Activated T-helper 2 cell treated with anti-CD3 and anti-CD28 coated beads, Interferon-gamma antibody, Interleukin-2, Interleukin-4, amounts not matched to agents 10 μg/mL and 5 μg/mL and 100 μg/mL, durations not matched to agents 14 hours and 24 hours and 36 hours (primary cell): ENCODE measurements at regions of chr9 and their contacts with region 1.

Region 1: DNA sequence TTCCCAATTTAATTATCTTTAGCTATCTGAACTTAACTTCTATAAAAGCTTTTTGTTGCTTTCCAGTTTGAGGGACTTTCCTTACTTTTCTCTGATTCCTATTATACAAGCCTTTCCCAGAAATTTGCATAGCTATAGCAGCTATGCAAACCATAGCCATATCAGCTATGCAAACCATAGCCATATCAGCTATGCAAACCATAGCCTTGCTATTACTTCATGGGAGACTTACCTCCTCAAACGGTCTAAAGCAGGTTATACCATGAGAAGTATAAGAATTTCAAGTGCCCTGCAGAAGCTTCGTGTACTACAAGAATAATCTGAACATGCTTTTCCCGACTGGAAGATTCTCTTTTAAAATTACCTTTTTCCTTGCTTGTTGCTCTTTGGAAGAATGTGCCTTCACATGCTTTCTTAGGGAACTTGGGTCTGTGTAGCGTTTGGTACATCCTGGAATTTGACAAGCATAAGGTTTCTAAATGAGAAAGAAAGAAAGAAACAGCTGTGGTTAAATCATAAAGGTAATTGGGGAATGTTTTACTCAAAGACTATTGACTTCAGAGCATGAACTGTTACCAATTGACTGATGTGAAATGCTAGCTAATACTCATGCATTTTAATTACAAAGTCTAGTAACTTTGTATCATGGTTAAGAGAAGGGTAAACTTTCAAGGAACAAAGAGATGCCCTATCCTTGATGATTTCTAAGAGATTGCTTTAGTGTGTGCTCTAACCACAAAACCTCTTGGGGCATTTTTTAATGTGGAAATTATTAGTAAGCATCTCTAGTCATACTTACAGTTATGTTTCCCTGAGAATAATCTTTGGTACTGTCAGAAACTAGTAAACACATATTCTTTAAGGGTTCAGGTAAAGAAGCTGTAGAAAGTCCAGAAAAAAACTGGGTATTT is 367.6 kb downstream of the GLIS3 start:
- DNase-seq: no peak
- H3K4me3 Mint-ChIP-seq: peak overlapping the region; percentile 51
- H3K27ac Mint-ChIP-seq: peak overlapping the region; percentile 93
- H3K4me1 Mint-ChIP-seq: peaks cover 33% of the 10 kb centered on the region
- H3K27me3 Mint-ChIP-seq: no peaks in the 10 kb centered on the region

Region 2: GRCh38 chr9:3868012-3868411 is 64.2 kb before region 1 on chr9:
- intact Hi-C with region 1: loop called (anchors 2 kb)
- DNase-seq: no peak
- H3K4me3 Mint-ChIP-seq: no peak overlapping the region
- H3K27ac Mint-ChIP-seq: no peak overlapping the region
- H3K4me1 Mint-ChIP-seq: peaks cover 57% of the 10 kb centered on the region
- H3K27me3 Mint-ChIP-seq: no peaks in the 10 kb centered on the region

Region 3: DNA sequence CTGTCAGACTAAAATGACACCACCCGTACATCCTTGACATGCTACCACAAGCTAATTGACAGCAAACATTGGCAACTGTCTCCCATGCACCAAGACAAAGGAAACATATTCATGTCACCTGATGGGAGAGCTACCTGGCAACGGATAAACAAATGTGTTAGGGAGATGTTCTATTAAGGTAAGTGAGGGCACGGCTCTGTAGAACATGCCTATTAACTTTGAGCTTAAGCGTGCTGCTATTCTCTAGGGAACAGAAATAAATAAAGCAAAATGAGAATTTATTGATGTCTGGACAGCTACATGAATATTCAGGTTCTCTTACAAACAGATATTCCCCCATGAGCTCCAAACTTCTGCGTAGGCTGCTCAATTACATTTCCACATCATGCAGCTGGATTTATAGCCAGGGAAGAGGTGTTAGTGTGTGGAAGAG is 45.0 kb before region 1 on chr9:
- intact Hi-C with region 1: loop called (anchors 5 kb)
- DNase-seq: no peak
- H3K4me3 Mint-ChIP-seq: no peak overlapping the region
- H3K27ac Mint-ChIP-seq: no peak overlapping the region
- H3K4me1 Mint-ChIP-seq: peaks cover 51% of the 10 kb centered on the region
- H3K27me3 Mint-ChIP-seq: no peaks in the 10 kb centered on the region

Region 4: GRCh38 chr9:3948826-3949556 is 16.7 kb after region 1 on chr9:
- intact Hi-C with region 1: no loop called
- DNase-seq: no peak
- H3K4me3 Mint-ChIP-seq: no peak overlapping the region
- H3K27ac Mint-ChIP-seq: no peak overlapping the region
- H3K4me1 Mint-ChIP-seq: no peaks in the 10 kb centered on the region
- H3K27me3 Mint-ChIP-seq: peaks cover 4% of the 10 kb centered on the region

Region 5: DNA sequence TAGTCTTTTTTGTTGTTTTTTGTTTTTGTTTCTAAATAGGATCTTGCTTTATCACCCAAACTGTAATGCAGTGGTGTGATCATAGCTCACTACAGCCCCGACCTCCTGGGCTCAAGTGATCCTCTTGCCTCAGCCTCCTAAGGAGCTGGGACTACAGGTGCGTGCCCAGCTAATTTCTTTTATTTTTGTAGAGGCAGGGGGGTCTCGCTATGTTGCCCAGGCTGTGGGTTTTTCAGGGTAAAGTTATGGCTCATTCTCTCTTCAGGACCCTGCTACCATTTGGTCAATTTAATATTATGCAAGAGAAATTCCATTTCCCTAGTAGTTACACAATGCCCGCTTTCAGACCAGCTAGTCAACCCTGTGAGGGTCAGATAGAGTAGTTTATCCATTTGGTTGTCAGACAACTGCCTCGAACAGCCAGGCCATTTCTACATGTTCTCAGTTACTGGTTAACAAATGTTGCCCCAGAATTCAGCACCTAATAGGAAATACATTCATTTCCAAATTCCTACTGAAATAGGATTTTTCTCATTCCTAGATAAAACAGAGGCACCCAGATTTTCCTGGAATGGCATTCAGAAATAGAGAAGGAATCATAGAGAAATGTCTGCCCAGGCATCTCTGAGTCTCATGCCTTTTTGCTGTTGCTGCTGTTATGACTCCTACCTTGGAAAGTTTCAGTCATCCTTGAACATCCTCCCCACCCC is 374.0 kb after region 1 on chr9:
- intact Hi-C with region 1: loop called (anchors 1 kb)
- DNase-seq: no peak
- H3K4me3 Mint-ChIP-seq: no peak overlapping the region
- H3K27ac Mint-ChIP-seq: peak overlapping the region; percentile 71
- H3K4me1 Mint-ChIP-seq: peaks cover 53% of the 10 kb centered on the region
- H3K27me3 Mint-ChIP-seq: peaks cover 13% of the 10 kb centered on the region